ENCODE measurements at regions of chr2 and their contacts with region 1.

Region 1: GRCh38 chr2:71950256-71951082 is 197.2 kb downstream of the CYP26B1 start:
- DNase-seq: no peak
- H3K4me3 ChIP-seq: no peak overlapping the region
- H3K27me3 ChIP-seq: no peaks in the 10 kb centered on the region
- CTCF ChIP-seq: no peak

Region 2: DNA sequence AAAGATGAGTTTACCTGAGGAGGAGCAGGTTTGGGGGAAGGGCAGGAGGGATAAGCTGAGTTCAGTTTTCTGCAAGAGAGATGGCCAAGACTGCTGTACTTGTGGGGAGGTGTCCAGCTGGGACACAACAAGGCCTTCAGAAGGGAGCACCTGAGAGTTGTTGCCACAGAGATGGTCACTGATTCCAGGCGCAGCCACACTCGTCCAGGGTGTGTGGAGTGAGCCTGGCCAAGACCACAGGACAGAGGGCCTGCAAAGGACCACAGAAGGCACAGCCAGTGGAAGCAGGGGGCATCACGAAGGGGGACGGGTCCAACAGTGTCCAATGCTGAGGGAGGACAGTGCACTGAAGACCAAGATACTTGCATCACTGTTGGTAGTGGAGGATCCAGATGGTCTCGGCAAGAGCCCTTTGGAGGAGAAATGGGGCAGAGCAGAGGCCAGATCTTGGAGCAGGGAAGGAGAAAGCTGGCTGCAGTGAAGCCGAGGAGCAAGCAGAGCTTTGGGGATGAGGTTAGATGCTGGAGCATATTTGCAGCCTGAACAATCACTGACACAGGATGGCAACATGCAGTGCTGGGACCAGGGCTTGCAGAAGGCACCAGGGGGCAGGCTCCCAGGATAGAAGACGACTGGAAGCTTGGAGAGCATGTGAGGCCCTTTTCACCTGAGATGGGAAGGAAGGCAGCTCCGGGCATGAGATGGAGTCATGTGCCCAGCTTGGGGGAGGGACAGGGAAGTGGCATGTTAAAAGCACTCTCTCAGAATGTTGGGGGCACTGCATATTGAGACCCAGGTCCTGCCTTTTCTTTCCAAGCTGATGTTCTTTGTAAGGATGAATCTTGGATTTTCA is 16.8 kb before region 1 on chr2:
- CTCF ChIA-PET with region 1: interaction called, 10 read pairs
- POLR2A ChIA-PET with region 1: no interaction called
- DNase-seq: no peak
- H3K4me3 ChIP-seq: no peak overlapping the region
- H3K27me3 ChIP-seq: no peaks in the 10 kb centered on the region
- CTCF ChIP-seq: peak; percentile 53

Region 3: GRCh38 chr2:71971493-71971892 is 21.0 kb after region 1 on chr2:
- CTCF ChIA-PET with region 1: no interaction called
- POLR2A ChIA-PET with region 1: no interaction called
- DNase-seq: no peak
- H3K4me3 ChIP-seq: no peak overlapping the region
- H3K27me3 ChIP-seq: peaks cover 10% of the 10 kb centered on the region
- CTCF ChIP-seq: no peak

Region 4: DNA sequence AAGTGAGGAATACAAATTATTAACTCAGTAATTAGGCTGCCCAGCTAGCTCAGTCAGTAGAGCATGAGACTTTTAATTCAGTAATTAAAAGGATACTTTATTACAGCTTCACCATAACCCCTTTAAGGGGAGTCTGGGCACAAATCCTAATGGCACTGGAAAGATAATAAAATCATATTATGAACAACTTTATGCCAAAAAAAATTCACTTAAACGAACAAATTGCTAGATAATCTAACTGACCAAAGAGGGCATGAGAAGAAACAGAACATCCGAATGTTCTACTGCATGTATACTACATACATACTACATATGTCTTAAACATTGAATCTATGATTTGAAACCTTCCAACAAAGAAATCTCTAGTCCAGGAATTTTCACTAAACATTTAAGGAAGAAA is 37.7 kb after region 1 on chr2:
- CTCF ChIA-PET with region 1: no interaction called
- POLR2A ChIA-PET with region 1: no interaction called
- DNase-seq: no peak
- H3K4me3 ChIP-seq: no peak overlapping the region
- H3K27me3 ChIP-seq: peaks cover 2% of the 10 kb centered on the region
- CTCF ChIP-seq: no peak

Measured in BJ (cell line).